T47D (cell line): ENCODE measurements at regions of chr3 and their contacts with region 1.

Region 1: DNA sequence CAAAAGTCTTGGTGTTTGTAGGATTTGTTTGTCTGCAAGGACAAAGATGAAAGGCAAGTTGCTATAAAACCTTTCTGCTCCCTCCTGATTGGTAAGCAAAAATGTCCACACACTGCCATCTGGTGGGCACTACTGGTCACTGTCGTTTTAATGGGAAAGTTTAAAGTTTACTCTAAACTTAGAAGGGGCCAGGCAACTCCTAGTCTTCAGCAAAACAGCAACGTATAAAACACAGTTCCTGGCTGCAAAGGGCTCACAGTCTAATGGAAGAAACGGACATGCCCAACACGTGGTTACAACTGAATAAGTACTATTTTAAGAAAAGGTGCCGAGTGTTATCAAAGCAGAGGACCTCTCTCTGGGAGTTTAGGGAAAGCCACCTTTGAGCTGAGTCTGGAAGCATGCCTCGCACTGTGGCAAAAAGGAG is 23.7 kb upstream of the TPRG1 start:
- DNase-seq: peak; percentile 39 to 83

Region 2: GRCh38 chr3:188607805-188608315 is 540.2 kb before region 1 on chr3:
- in situ Hi-C with region 1: no loop called
- DNase-seq: no peak

Region 3: GRCh38 chr3:188853856-188854771 is 294.0 kb before region 1 on chr3:
- in situ Hi-C with region 1: no loop called
- DNase-seq: no peak

Region 4: GRCh38 chr3:188954590-188955208 is 193.4 kb before region 1 on chr3:
- in situ Hi-C with region 1: loop called (anchors 10 kb)
- DNase-seq: peak; percentile 54 to 94